Activated CD4-positive, alpha-beta T cell treated with anti-CD3 and anti-CD28 coated beads for 36 hours (primary cell): ENCODE measurements at regions of chr13 and their contacts with region 1.

Region 1: GRCh38 chr13:69142101-69142500 is 965.5 kb upstream of the ATXN8OS start:
- DNase-seq: no peak
- ATAC-seq: no peak
- H3K4me3 Mint-ChIP-seq: no peak overlapping the region
- H3K27ac Mint-ChIP-seq: no peak overlapping the region
- H3K4me1 Mint-ChIP-seq: no peaks in the 10 kb centered on the region
- H3K27me3 Mint-ChIP-seq: no peaks in the 10 kb centered on the region

Region 2: DNA sequence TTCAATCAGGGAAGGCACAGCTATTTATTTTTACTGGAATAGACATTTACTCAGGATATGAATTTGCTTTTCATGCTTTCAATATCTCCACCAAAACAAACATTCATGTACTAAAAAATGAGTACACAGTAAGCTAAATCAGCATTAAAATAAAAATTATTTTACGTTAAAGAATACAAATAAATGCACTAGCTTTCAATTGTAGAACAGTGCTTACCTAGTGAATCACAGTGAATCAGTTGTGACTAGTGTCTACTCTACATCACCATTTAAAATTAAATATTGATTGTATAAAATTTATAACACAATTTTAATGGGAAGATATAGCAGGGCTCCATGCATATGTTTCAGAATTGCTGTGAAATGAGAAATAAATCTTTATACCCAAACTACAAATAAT is 35.9 kb after region 1 on chr13:
- CTCF ChIA-PET with region 1: no interaction called
- POLR2A ChIA-PET with region 1: no interaction called
- intact Hi-C with region 1: loop called in 1 of 2 experiments (anchors 2 kb)
- DNase-seq: no peak
- ATAC-seq: no peak
- H3K4me3 Mint-ChIP-seq: no peak overlapping the region
- H3K27ac Mint-ChIP-seq: no peak overlapping the region
- H3K4me1 Mint-ChIP-seq: no peaks in the 10 kb centered on the region
- H3K27me3 Mint-ChIP-seq: no peaks in the 10 kb centered on the region

Region 3: GRCh38 chr13:69199664-69200063 is 57.6 kb after region 1 on chr13:
- CTCF ChIA-PET with region 1: no interaction called
- POLR2A ChIA-PET with region 1: no interaction called
- intact Hi-C with region 1: no loop called
- DNase-seq: no peak
- ATAC-seq: no peak
- H3K4me3 Mint-ChIP-seq: no peak overlapping the region
- H3K27ac Mint-ChIP-seq: no peak overlapping the region
- H3K4me1 Mint-ChIP-seq: no peaks in the 10 kb centered on the region
- H3K27me3 Mint-ChIP-seq: no peaks in the 10 kb centered on the region